Calu3 (cell line): ENCODE measurements at regions of chr5 and their contacts with region 1.

Region 1: DNA sequence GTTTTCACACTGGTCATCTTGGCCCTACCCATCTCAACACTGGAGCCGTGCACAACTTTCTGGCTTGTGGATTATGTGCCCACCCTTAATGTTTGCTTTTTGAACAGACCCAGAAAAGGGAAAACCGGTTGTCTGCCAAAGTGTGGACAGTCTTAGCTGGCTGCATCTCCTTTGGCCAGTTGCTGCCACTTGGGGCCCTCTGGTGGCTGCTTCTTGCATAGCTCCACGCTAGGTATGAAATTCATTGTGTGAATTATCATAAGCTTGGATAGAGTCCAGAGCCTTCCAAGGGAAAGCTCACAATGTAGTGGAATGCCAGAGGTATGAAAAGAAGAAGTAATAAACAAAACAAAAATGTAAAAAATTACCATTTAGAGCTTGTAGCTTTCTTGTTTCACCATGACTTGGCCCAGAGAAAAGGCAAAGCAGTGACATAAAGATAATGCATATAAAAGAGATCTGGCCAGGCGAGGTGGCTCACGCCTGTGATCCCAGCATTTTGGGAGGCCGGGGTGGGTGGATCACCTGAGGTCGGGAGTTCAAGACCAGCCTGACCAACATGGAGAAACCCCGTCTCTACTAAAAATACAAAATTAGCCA is 12.5 kb upstream of the SLC36A3 start:
- DNase-seq: peak; percentile 88
- H3K4me3 Mint-ChIP-seq: no peak overlapping the region
- H3K27ac Mint-ChIP-seq: no peak overlapping the region
- H3K4me1 Mint-ChIP-seq: no peaks in the 10 kb centered on the region
- H3K27me3 Mint-ChIP-seq: peaks cover 45% of the 10 kb centered on the region
- CTCF ChIP-seq: peak; percentile 92

Region 2: DNA sequence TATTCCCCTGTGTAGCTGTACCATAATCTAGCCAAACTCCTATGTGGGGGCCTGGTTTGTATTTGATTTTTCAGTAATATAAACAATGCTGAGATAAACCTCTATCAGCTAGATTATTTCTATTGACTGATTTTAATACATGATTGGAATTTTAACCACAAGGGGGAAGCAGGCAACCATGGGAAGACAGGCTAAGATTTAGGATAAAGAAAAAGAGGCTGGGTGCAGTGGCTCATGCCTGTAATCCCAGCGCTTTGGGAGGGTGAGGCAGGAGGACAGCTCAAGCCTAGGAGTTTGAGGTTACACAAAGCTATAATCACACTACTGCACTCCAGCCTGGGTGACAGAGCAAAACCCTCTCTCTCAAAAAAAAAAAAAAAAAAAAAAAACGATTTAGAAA is 313.8 kb before region 1 on chr5:
- CTCF ChIA-PET with region 1: interaction called, 10 read pairs
- intact Hi-C with region 1: loop called (anchors 1 kb)
- DNase-seq: peak; percentile 52
- H3K4me3 Mint-ChIP-seq: no peak overlapping the region
- H3K27ac Mint-ChIP-seq: no peak overlapping the region
- H3K4me1 Mint-ChIP-seq: no peaks in the 10 kb centered on the region
- H3K27me3 Mint-ChIP-seq: peaks cover 26% of the 10 kb centered on the region
- CTCF ChIP-seq: no peak

Region 3: GRCh38 chr5:151126199-151126645 is 189.9 kb before region 1 on chr5:
- CTCF ChIA-PET with region 1: interaction called, 14 read pairs
- intact Hi-C with region 1: loop called (anchors 1 kb)
- DNase-seq: peak; percentile 86
- H3K4me3 Mint-ChIP-seq: no peak overlapping the region
- H3K27ac Mint-ChIP-seq: no peak overlapping the region
- H3K4me1 Mint-ChIP-seq: peaks cover 11% of the 10 kb centered on the region
- H3K27me3 Mint-ChIP-seq: no peaks in the 10 kb centered on the region
- CTCF ChIP-seq: peak; percentile 91

Region 4: DNA sequence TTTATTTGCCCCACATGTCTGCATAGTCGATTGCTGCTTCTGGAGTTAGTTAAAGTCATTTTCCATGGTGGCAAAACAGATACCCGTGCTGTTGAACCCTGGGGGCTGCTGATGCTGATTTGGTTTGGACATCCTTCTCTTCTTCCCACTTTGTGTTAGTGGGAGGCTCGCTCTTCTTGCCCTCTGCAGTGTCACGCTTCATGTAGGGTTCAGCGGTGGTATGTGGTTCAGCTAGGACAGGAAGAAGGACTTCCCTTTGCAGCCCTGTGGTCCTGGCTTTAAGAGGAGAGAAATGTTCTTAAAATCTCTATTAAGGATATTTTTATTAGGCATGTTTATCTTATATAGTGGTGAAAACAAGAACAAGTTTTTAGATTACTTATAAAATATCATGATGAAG is 167.5 kb after region 1 on chr5:
- CTCF ChIA-PET with region 1: no interaction called
- intact Hi-C with region 1: no loop called
- DNase-seq: no peak
- H3K4me3 Mint-ChIP-seq: no peak overlapping the region
- H3K27ac Mint-ChIP-seq: no peak overlapping the region
- H3K4me1 Mint-ChIP-seq: no peaks in the 10 kb centered on the region
- H3K27me3 Mint-ChIP-seq: no peaks in the 10 kb centered on the region
- CTCF ChIP-seq: no peak

Region 5: DNA sequence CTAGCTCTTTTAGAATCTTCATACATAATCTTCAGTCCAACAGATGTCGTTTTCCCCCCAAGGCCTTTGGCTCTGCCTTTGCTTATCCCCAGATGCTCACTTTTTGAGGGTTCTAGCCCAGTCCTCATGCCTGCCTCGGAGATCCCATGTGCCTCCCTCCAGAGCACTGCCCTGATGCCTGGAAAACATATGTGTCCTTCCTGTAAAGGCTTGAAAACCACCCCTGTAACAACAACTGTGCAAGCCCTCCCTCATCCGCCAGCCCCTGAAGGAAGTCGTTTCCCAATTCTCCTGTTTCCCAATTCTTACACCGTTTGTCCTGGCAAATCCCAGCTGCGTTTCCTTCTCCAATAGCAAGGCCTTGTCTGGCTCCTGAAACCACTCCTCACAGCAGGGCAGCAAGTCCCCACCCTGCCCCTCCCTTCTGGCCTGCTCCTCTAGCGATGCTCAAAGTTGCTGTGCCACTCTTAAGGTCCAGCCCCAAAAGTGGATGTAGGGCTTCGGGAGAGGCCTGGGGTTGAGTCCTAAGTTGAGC is 183.5 kb after region 1 on chr5:
- CTCF ChIA-PET with region 1: no interaction called
- intact Hi-C with region 1: loop called (anchors 5 kb)
- DNase-seq: no peak
- H3K4me3 Mint-ChIP-seq: no peak overlapping the region
- H3K27ac Mint-ChIP-seq: no peak overlapping the region
- H3K4me1 Mint-ChIP-seq: no peaks in the 10 kb centered on the region
- H3K27me3 Mint-ChIP-seq: no peaks in the 10 kb centered on the region
- CTCF ChIP-seq: no peak

Region 6: DNA sequence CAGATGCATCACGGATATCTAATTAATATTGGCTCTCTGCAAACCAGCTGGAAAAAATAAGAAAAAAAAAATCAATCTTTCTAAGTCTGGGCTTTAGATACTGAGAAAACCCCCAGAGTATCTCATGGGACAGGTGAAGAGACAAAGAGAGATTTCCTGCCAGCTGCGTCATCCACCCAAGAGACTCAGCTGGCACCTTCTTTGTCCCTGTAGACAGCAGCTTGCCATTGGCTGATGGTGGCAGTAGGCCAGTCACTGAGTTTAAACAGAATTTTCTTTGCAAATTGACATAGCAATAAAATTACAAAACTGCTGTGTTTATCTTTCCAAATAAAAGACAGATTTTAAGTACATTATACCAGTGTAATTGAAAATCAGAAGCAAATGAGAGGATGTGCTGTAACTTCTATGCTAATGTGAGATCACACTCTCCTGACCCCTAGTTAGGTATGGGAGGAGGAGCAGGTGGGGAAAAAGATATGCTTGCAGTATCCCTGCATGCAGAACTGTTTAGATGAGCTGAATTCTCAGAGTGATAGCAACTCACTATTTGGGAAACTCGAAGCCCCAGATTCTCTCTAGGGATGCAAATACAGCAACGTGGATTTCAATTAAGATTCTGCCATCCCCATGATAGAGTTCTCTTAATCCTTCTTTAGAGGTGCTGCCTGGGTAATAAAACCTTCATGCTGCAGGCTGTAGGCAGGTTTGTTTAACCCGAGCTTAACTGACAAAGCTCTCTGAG is 1016.8 kb after region 1 on chr5:
- CTCF ChIA-PET with region 1: no interaction called
- intact Hi-C with region 1: no loop called
- DNase-seq: no peak
- H3K4me3 Mint-ChIP-seq: no peak overlapping the region
- H3K27ac Mint-ChIP-seq: no peak overlapping the region
- H3K4me1 Mint-ChIP-seq: peaks cover 17% of the 10 kb centered on the region
- H3K27me3 Mint-ChIP-seq: no peaks in the 10 kb centered on the region
- CTCF ChIP-seq: no peak